ENCODE measurements at regions of chr16 and their contacts with region 1.

Region 1: DNA sequence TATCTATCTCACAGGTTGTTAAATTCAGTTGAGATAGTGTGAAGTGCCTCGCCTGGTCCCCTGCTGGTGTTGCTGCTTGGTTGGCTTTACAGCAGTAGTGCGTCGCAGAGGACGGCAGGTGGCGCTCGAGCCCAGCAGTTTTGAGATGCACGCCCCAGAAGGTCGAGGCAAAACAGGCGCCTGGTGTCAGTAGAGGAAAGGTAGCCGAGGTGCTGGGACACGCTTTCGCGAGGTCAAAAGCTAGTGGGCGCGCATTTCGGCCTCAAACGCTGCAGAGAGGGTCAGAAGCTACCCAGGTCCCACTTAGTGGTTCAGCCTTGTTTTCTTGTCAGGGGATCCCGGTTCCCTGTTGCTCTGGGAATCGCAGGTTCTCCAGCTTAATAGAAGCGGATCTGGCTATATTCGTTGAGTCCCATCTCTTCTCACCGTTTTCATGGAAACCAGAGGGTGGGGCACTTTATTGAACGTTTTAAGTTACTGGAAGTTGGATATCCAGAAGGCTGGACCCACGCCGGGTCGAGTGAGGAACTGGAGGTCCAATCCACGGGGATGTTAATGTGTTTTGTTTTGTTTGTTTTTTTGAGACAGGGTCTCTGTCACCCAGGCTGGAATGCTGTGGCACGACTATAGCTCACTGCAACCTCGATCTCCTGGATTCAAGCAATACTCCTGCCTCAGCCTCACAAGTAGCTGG is 10.3 kb upstream of the ZFP90 start:
- DNase-seq: peak; percentile 80 to 89
- H3K4me3 ChIP-seq: peak overlapping the region in 1 of 2 donors; percentile 33
- H3K27ac ChIP-seq: no peak overlapping the region
- H3K4me1 ChIP-seq: peaks cover 3 to 19% (median 13%) of the 10 kb centered on the region in 4 donors
- H3K27me3 ChIP-seq: peaks cover 0 to 3% of the 10 kb centered on the region in 2 donors
- CTCF ChIP-seq: peak; percentile 93 to 94

Region 2: GRCh38 chr16:68310761-68311511 is 217.9 kb before region 1 on chr16 and contains the starts of genes PRMT7 and SLC7A6OS:
- intact Hi-C with region 1: no loop called
- DNase-seq: peak; percentile 91 to 92
- H3K4me3 ChIP-seq: peak within 1 kb of the TSS; percentile 64 to 91
- H3K27ac ChIP-seq: peak within 1 kb of the TSS; percentile 71 to 79
- H3K4me1 ChIP-seq: peaks cover 0 to 40% (median 22%) of the 10 kb centered on the region in 4 donors
- H3K27me3 ChIP-seq: no peaks in the 10 kb centered on the region
- CTCF ChIP-seq: peak in 1 of 2 experiments; percentile 25

Region 3: GRCh38 chr16:68843482-68844210 is 314.8 kb after region 1 on chr16 and contains the start of gene TANGO6:
- intact Hi-C with region 1: loop called (anchors 5 kb)
- DNase-seq: peak; percentile 82 to 89
- H3K4me3 ChIP-seq: peak within 1 kb of the TSS; percentile 78 to 91
- H3K27ac ChIP-seq: peak within 1 kb of the TSS; percentile 87 to 95
- H3K4me1 ChIP-seq: peaks cover 0 to 15% (median 4%) of the 10 kb centered on the region in 4 donors
- H3K27me3 ChIP-seq: no peaks in the 10 kb centered on the region
- CTCF ChIP-seq: no peak

Measured in tibial artery (tissue), 4 donors.